ENCODE measurements at regions of chr9 and their contacts with region 1.

Region 1: DNA sequence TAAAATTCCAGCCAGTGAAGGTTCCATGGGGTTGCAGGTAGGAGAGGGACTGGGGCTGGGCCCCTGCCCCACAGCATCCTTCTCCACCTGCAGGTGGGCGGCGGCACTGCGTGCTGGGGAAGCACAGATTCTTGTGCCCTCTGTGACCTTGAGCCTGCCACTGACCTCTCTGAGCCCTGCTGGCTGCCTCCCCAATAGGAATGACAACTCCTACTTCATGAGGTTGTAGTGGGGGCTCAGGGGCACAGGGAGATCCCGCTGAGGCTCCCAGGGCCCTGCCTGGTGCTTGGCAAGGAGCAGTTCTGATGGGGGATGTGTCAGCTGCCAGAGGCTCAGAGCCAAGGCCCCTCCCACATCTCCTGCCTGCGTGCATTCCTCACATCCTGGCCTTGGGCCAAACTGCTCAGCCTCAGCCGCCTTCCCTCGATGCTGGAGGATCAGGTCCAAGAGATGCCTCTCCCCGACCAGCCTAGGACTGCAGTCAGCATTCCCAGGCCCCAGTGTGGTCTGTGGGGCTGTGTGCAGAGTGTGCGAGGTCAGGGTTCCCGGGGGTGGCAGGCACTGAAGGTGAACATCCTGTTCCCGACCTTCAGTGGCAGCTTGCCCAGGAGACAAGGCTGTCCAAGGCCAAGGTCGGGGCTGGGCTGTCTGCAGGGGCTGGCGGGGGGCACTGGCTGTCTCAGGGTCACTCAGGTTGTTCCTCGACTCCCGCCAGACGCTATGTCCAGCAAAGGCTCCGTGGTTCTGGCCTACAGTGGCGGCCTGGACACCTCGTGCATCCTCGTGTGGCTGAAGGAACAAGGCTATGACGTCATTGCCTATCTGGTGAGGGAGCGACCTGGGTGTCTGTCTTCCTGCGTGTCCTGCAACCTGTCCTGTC is 7.0 kb downstream of the ASS1 start:
- DNase-seq: peak; percentile 69 to 94
- H3K4me3 ChIP-seq: no peak overlapping the region
- H3K27ac ChIP-seq: no peak overlapping the region
- H3K4me1 ChIP-seq: peaks cover 31% of the 10 kb centered on the region
- H3K27me3 ChIP-seq: no peaks in the 10 kb centered on the region
- CTCF ChIP-seq: peak; percentile 88

Region 2: GRCh38 chr9:130417602-130418001 is 34.1 kb before region 1 on chr9:
- CTCF ChIA-PET with region 1: no interaction called
- POLR2A ChIA-PET with region 1: no interaction called
- intact Hi-C with region 1: loop called (anchors 2 kb)
- DNase-seq: peak in 1 of 2 experiments; percentile 32
- H3K4me3 ChIP-seq: no peak overlapping the region
- H3K27ac ChIP-seq: no peak overlapping the region
- H3K4me1 ChIP-seq: peaks cover 15% of the 10 kb centered on the region
- H3K27me3 ChIP-seq: no peaks in the 10 kb centered on the region
- CTCF ChIP-seq: 0 out of 2 replicates have a peak, but pooled peaks have one; percentile 29

Region 3: GRCh38 chr9:130437011-130437784 is 14.6 kb before region 1 on chr9:
- CTCF ChIA-PET with region 1: interaction called, 12 read pairs
- POLR2A ChIA-PET with region 1: no interaction called
- intact Hi-C with region 1: no loop called
- DNase-seq: no peak
- H3K4me3 ChIP-seq: no peak overlapping the region
- H3K27ac ChIP-seq: no peak overlapping the region
- H3K4me1 ChIP-seq: no peaks in the 10 kb centered on the region
- H3K27me3 ChIP-seq: no peaks in the 10 kb centered on the region
- CTCF ChIP-seq: no peak

Region 4: DNA sequence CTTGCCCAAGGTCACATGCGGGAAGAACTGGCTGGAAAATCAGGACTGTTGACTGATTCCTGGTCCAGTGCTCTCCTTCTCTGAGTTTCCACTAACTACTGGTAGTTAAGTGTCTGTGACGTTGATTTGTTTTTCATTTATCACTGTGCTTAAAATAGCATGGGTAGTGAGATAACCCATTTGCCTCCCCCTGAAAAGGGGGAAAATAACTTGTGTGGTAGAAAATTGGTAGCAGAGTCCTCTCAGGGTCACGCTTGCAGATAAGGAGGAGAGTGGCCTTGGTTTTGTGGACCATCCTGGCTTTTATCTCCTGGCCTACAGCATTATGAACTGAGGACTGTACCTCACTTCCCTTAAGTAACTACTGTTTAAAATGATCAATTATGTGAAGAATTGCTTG is 138.6 kb after region 1 on chr9:
- CTCF ChIA-PET with region 1: no interaction called
- POLR2A ChIA-PET with region 1: no interaction called
- intact Hi-C with region 1: no loop called
- DNase-seq: no peak
- H3K4me3 ChIP-seq: no peak overlapping the region
- H3K27ac ChIP-seq: no peak overlapping the region
- H3K4me1 ChIP-seq: no peaks in the 10 kb centered on the region
- H3K27me3 ChIP-seq: no peaks in the 10 kb centered on the region
- CTCF ChIP-seq: no peak

Region 5: DNA sequence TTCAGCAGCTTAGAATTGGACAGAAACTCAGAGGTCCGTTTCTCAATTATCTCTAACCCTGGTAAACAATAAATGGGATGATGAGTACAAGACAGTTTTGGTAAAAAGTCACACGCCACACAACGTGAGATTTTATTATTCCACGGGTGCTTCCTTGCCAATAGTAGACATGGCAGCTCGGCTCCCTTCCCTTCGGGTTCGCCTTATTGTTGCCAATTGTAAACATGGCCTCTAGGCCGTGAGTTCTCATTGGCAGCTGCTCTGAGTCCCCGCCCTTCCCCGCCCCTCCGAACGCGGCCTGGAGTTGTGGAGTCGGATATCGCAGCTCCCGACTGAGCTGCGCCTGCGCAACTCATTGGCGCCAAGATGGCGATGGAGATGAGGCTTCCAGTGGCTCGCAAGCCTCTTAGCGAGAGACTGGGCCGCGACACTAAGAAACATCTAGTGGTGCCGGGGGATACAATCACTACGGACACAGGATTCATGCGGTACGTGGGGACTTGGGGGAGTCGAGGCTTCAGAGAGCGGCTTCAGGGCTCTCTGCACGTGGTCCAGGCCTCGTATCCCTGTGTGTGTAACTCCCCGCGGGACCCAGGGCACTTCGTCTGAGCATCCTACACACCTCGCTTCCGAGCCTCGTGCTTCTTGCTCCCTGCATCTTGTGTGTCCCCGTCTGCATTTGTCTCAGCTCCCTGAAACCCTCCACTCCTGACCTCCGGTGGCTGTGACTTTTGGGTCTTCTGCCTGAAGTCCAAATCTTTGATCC is 241.9 kb after region 1 on chr9 and contains the start of gene EXOSC2:
- CTCF ChIA-PET with region 1: interaction called, 16 read pairs
- POLR2A ChIA-PET with region 1: interaction called, 4 read pairs
- intact Hi-C with region 1: no loop called
- DNase-seq: peak; percentile 90 to 95
- H3K4me3 ChIP-seq: peak within 1 kb of the TSS; percentile 88
- H3K27ac ChIP-seq: no peak within 1 kb of the TSS
- H3K4me1 ChIP-seq: peaks cover 22% of the 10 kb centered on the region
- H3K27me3 ChIP-seq: no peaks in the 10 kb centered on the region
- CTCF ChIP-seq: no peak
- total RNA-seq, gene EXOSC2: 49.5 and 52.0 TPM in 2 replicates